T-cell (primary cell): ENCODE measurements at regions of chr12 and their contacts with region 1.

Region 1: GRCh38 chr12:89709157-89709994 is 738 bp upstream of the ATP2B1 start:
- DNase-seq: peak; percentile 93 to 100 (median 98)
- ATAC-seq: peak; percentile 72 to 80 (median 76)
- H3K4me3 ChIP-seq: peak overlapping the region; percentile 95 to 99
- H3K4me3 Mint-ChIP-seq: peak overlapping the region; percentile 90 to 92 (median 91)
- H3K27ac ChIP-seq: peak overlapping the region; percentile 98
- H3K27ac Mint-ChIP-seq: peak overlapping the region; percentile 90 to 91
- H3K4me1 ChIP-seq: peaks cover 20 to 22% of the 10 kb centered on the region in 2 experiments
- H3K4me1 Mint-ChIP-seq: peaks cover 37 to 41% (median 37%) of the 10 kb centered on the region in 3 donors
- H3K27me3 ChIP-seq: peaks cover 0 to 4% of the 10 kb centered on the region in 2 experiments
- H3K27me3 Mint-ChIP-seq: no peaks in the 10 kb centered on the region

Region 2: GRCh38 chr12:89451841-89452251 is 257.5 kb before region 1 on chr12:
- CTCF ChIA-PET with region 1: no interaction called
- POLR2A ChIA-PET with region 1: no interaction called
- DNase-seq: no peak
- ATAC-seq: no peak
- H3K4me3 ChIP-seq: no peak overlapping the region
- H3K4me3 Mint-ChIP-seq: no peak overlapping the region
- H3K27ac ChIP-seq: no peak overlapping the region
- H3K27ac Mint-ChIP-seq: no peak overlapping the region
- H3K4me1 ChIP-seq: no peaks in the 10 kb centered on the region
- H3K4me1 Mint-ChIP-seq: peaks cover 9 to 17% (median 14%) of the 10 kb centered on the region in 3 donors
- H3K27me3 ChIP-seq: no peaks in the 10 kb centered on the region
- H3K27me3 Mint-ChIP-seq: no peaks in the 10 kb centered on the region

Region 3: DNA sequence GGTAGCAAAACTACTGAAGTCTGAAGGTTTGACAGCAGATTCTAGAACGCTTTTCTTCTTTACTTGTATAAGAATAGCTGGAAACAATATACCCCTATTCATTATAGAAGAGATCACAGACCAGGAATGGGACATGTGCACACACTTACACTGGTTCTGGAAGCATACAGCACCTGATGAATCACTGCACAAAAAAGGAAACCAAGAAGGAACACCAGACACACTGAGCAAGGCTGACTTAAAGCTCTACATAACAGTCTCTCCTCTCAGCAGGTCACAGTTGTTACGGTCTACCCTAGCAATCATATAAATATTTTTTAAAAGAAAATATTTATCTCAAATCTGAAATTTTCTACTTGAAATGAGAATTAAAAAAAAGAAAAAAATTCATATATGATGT is 14.3 kb before region 1 on chr12:
- CTCF ChIA-PET with region 1: interaction called, 3 to 5 read pairs
- POLR2A ChIA-PET with region 1: interaction called, 3 to 33 read pairs
- DNase-seq: no peak
- ATAC-seq: peak in 2 of 4 experiments; percentile 31 to 40
- H3K4me3 ChIP-seq: no peak overlapping the region
- H3K4me3 Mint-ChIP-seq: no peak overlapping the region
- H3K27ac ChIP-seq: no peak overlapping the region
- H3K27ac Mint-ChIP-seq: no peak overlapping the region
- H3K4me1 ChIP-seq: peaks cover 8 to 23% of the 10 kb centered on the region in 2 experiments
- H3K4me1 Mint-ChIP-seq: peaks cover 82 to 86% (median 86%) of the 10 kb centered on the region in 3 donors
- H3K27me3 ChIP-seq: no peaks in the 10 kb centered on the region
- H3K27me3 Mint-ChIP-seq: no peaks in the 10 kb centered on the region

Region 4: GRCh38 chr12:89760783-89761182 is 51.4 kb after region 1 on chr12:
- CTCF ChIA-PET with region 1: no interaction called
- POLR2A ChIA-PET with region 1: interaction called, 3 to 14 read pairs
- DNase-seq: peak in 1 of 35 experiments; percentile 67
- ATAC-seq: peak; percentile 21 to 71 (median 58)
- H3K4me3 ChIP-seq: no peak overlapping the region
- H3K4me3 Mint-ChIP-seq: peak overlapping the region in 1 of 3 donors; percentile 19
- H3K27ac ChIP-seq: peak overlapping the region; percentile 42
- H3K27ac Mint-ChIP-seq: peak overlapping the region; percentile 70 to 85
- H3K4me1 ChIP-seq: peaks cover 6 to 17% of the 10 kb centered on the region in 2 experiments
- H3K4me1 Mint-ChIP-seq: peaks cover 43 to 63% (median 53%) of the 10 kb centered on the region in 3 donors
- H3K27me3 ChIP-seq: no peaks in the 10 kb centered on the region
- H3K27me3 Mint-ChIP-seq: no peaks in the 10 kb centered on the region

Region 5: GRCh38 chr12:89862511-89863179 is 153.3 kb after region 1 on chr12:
- CTCF ChIA-PET with region 1: interaction called in 1 of 2 experiments, 4 read pairs
- POLR2A ChIA-PET with region 1: interaction called, 3 to 29 read pairs
- DNase-seq: peak in 32 of 35 experiments; percentile 12 to 77 (median 41)
- ATAC-seq: peak; percentile 34 to 75 (median 64)
- H3K4me3 ChIP-seq: peak overlapping the region; percentile 26 to 35
- H3K4me3 Mint-ChIP-seq: peak overlapping the region; percentile 74 to 82 (median 80)
- H3K27ac ChIP-seq: peak overlapping the region; percentile 96
- H3K27ac Mint-ChIP-seq: peak overlapping the region; percentile 95 to 97
- H3K4me1 ChIP-seq: peaks cover 29 to 33% of the 10 kb centered on the region in 2 experiments
- H3K4me1 Mint-ChIP-seq: peaks cover 67 to 73% (median 70%) of the 10 kb centered on the region in 3 donors
- H3K27me3 ChIP-seq: no peaks in the 10 kb centered on the region
- H3K27me3 Mint-ChIP-seq: no peaks in the 10 kb centered on the region

Region 6: GRCh38 chr12:89880690-89881350 is 171.4 kb after region 1 on chr12:
- CTCF ChIA-PET with region 1: interaction called in 1 of 2 experiments, 4 read pairs
- POLR2A ChIA-PET with region 1: interaction called in 1 of 2 experiments, 11 read pairs
- DNase-seq: peak in 34 of 35 experiments; percentile 22 to 83 (median 58)
- ATAC-seq: peak; percentile 97 to 100 (median 99)
- H3K4me3 ChIP-seq: no peak overlapping the region
- H3K4me3 Mint-ChIP-seq: peak overlapping the region; percentile 47 to 71 (median 57)
- H3K27ac ChIP-seq: peak overlapping the region; percentile 90
- H3K27ac Mint-ChIP-seq: peak overlapping the region; percentile 97 to 98
- H3K4me1 ChIP-seq: peaks cover 17 to 37% of the 10 kb centered on the region in 2 experiments
- H3K4me1 Mint-ChIP-seq: peaks cover 54 to 65% (median 65%) of the 10 kb centered on the region in 3 donors
- H3K27me3 ChIP-seq: no peaks in the 10 kb centered on the region
- H3K27me3 Mint-ChIP-seq: no peaks in the 10 kb centered on the region

Region 7: DNA sequence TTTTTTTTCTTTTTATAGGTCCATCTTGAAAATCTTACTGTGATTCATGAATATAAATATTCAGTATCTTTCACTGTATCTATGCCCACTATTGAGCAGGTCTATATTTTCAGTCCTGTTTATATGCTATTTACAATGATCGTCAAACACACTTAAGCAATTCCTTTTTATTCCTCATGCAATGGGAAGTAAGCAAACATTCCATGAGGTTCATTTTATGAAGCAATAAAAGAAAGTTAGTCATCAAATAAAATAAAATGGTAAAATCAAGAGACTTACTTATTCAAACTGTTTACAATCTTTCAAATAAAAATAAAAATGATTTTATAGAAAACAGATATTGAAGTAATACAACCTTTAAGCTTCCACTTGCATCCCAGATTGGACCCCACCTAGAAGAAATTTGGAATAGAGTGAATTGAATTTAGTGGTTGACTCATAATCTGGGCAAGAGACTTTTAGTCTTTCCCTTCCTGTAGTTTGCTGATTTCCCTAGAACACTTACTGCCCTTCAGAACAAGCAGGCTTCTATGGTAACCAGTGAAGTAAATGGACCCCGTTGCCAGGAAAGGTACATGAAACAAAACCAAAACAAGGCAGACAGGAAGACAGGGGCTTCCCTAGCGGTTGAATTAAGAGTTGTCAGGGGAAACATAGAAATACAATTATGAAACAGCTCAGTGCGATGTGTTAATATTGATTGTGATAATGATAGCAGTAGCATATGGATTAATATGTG is 240.2 kb after region 1 on chr12:
- CTCF ChIA-PET with region 1: interaction called in 1 of 2 experiments, 6 read pairs
- POLR2A ChIA-PET with region 1: interaction called in 1 of 2 experiments, 23 read pairs
- DNase-seq: peak in 32 of 35 experiments; percentile 17 to 91 (median 56)
- ATAC-seq: peak; percentile 81 to 97 (median 84)
- H3K4me3 ChIP-seq: no peak overlapping the region
- H3K4me3 Mint-ChIP-seq: peak overlapping the region; percentile 18 to 41 (median 34)
- H3K27ac ChIP-seq: peak overlapping the region; percentile 92
- H3K27ac Mint-ChIP-seq: peak overlapping the region; percentile 81 to 87
- H3K4me1 ChIP-seq: peaks cover 14 to 36% of the 10 kb centered on the region in 2 experiments
- H3K4me1 Mint-ChIP-seq: peaks cover 50 to 69% (median 50%) of the 10 kb centered on the region in 3 donors
- H3K27me3 ChIP-seq: no peaks in the 10 kb centered on the region
- H3K27me3 Mint-ChIP-seq: no peaks in the 10 kb centered on the region